Psoas muscle (tissue), 8 donors: ENCODE measurements at regions of chr14 and their contacts with region 1.

Region 1: GRCh38 chr14:67934008-67934481 is 114.5 kb downstream of the RAD51B start:
- DNase-seq: no peak
- ATAC-seq: peak; percentile 79 to 93 (median 86)
- H3K4me3 ChIP-seq: no peak overlapping the region
- H3K27ac ChIP-seq: peak overlapping the region; percentile 34
- H3K4me1 ChIP-seq: peaks cover 7% of the 10 kb centered on the region
- H3K27me3 ChIP-seq: no peaks in the 10 kb centered on the region
- CTCF ChIP-seq: peak; percentile 78

Region 2: DNA sequence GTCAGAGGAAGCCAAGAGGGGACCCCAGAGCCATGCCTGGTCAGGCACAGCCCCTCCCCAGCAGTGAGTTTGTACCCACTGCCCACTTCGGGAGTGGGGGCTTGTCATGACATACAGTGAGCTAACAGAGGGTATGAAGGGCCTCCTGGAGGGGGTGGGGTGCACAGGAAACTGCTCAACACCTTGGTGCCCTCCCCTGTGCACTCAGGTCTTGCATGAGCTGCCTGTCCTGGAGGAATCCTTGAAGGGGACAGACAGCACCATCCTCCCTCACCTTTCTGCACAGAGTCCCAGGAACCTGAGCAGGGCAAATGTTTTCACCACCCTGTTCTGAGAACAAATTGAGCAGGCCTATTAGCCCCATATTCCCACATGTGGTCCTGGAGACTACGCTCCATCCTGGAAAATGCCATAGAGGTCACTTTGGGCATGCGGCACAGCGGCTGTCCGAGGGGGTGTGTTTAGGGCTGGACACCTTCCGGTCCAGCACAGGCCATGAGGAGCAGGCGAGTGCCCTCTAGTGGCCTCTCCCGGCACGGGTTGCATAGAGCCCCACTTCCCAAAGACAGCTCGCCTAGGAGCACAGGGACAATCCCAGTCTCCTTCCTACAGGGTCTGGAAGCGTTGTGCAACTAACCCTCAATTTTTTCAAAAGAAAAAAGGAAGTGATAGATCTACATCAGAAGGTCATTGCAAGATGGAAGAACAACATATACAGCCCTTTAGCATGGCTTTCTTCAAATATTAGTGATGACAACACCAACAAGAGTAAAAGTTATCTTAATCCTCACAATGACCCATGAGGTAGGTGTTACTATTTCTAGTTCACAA is 890.7 kb after region 1 on chr14:
- intact Hi-C with region 1: loop called in 1 of 2 experiments (anchors 5 kb)
- DNase-seq: peak; percentile 89 to 92
- ATAC-seq: peak; percentile 89 to 97 (median 96)
- H3K4me3 ChIP-seq: no peak overlapping the region
- H3K27ac ChIP-seq: no peak overlapping the region
- H3K4me1 ChIP-seq: no peaks in the 10 kb centered on the region
- H3K27me3 ChIP-seq: no peaks in the 10 kb centered on the region
- CTCF ChIP-seq: peak; percentile 84